PC-9 (cell line): ENCODE measurements at regions of chr4 and their contacts with region 1.

Region 1: DNA sequence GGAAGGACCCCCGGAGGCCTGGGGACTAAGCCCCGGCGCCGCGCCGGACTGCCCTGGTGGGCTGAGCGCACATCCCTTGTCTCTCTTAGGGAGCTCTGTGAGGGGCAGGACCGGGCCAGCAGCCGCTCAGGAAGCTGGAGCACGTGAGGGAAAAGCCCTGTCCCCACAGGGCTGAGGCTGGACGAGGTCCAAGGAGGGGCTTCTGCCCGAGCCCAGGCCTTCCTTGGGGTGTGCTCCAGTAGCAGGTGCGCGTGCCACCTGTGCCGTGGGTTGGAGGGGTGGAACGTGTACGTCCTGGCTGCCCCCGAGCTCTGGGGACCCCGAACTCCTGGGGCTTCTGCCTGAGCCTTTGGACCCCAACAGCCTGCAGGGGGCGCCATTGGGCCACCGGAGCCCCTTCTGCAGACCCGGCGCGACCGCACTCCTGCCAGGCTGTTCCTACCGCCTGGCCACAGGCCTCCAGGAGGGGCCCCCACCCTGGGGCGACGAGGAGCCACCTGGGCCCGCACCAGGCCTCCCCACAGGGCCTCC is 27.2 kb downstream of the TACC3 start:
- DNase-seq: peak in 1 of 2 experiments; percentile 84
- H3K4me3 ChIP-seq: no peak overlapping the region
- H3K27ac ChIP-seq: no peak overlapping the region
- H3K4me1 ChIP-seq: no peaks in the 10 kb centered on the region
- H3K27me3 ChIP-seq: no peaks in the 10 kb centered on the region
- CTCF ChIP-seq: peak; percentile 93

Region 2: GRCh38 chr4:1792832-1793495 is 44.4 kb after region 1 on chr4 and contains the start of gene FGFR3:
- CTCF ChIA-PET with region 1: interaction called, 4 read pairs
- POLR2A ChIA-PET with region 1: no interaction called
- intact Hi-C with region 1: loop called (anchors 5 kb)
- DNase-seq: peak in 1 of 2 experiments; percentile 59
- H3K4me3 ChIP-seq: peak within 1 kb of the TSS; percentile 52; the same call in 1 of the 2 replicates
- H3K27ac ChIP-seq: no peak within 1 kb of the TSS
- H3K4me1 ChIP-seq: peaks cover 7% of the 10 kb centered on the region; the same call in 1 of the 2 replicates
- H3K27me3 ChIP-seq: peaks cover 31% of the 10 kb centered on the region
- CTCF ChIP-seq: no peak
- total RNA-seq, gene FGFR3: 8.2 and 10.6 TPM in 2 replicates